Heart left ventricle (tissue), 16 donors: ENCODE measurements at regions of chr2 and their contacts with region 1.

Region 1: DNA sequence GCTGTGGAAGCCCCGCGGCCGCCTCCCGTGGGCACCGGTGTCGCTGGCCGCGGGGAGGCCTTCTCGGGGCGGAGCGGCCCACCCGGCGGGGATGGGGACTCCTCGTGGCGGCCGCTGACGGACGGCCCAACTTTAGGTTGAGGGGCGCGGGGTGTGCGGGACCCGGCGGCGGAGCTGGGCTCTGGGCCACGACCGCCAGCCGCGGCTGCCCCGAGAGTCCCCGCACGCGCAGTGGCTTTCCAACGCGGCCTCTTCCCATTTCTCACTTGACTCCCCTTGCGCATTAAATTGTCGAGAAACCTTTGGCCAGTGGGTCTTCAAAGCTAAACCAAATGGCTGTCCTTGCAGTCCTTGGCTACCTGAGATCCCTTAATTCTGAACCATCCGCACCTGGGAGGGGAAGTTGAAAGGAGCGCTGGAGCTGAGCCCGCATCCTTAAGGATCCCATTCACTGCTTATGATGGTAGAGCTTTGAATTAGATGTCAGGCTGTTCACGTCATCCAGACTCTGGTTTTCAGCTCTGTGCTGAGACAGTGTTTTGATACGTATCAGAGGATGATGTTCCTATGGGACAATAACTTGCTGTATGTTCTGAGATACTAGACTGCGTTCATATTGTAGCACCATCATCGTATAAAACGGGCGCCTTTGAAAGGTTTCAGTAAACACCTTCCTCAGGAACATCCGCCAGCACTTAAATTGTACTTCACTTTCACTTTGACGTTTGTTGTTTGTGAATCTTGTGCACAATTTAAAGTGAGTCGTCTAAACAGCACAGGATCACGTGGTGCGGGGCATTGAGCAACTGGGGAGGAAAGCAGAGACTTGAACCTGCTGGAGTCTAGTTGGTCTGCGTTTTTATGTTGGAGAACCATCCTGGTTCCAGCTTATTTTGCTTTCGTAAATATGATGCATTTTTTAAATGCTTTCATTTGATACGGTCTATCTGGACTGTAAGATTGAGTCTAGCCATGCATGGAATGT is 874 bp downstream of the CLIP4 start:
- DNase-seq: peak; percentile 25 to 72 (median 54)
- ATAC-seq: peak; percentile 6 to 47 (median 24)
- H3K4me3 ChIP-seq: peak overlapping the region; percentile 48 to 92 (median 74)
- H3K27ac ChIP-seq: peak overlapping the region; percentile 43 to 94 (median 80)
- H3K4me1 ChIP-seq: peaks cover 0 to 64% (median 18%) of the 10 kb centered on the region in 12 donors
- H3K27me3 ChIP-seq: peaks cover 0 to 3% (median 0%) of the 10 kb centered on the region in 9 donors
- CTCF ChIP-seq: no peak
- POLR2A ChIP-seq: no peak

Region 2: DNA sequence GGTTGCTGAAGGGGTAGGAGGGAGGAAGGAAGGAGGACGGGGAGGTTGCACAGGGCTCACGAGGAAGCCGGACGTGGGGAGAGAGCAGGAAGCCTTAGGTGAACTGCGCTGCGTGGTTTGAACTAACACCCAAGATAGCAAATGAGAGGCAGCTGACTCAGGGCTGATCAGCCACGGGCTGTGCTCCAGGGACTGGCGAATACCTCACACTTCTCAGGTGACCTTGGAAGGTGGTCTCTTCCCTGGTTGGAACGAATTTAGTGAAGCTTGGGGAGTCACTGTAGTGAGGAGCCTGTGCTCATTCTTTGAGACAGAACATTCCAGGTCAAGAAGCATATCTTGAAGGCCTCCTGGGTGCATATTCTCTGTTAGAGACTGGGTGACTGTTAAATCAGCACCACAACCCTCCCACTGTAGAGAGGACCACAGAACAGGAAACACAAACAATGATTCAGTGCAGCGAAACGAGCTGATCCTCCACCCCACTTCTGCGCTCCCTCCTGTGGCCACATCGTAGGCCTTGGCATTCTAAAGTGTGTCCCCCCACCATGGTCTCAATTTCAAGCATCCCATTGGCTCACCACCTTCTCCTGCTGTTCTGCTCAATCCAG is 101.2 kb before region 1 on chr2:
- intact Hi-C with region 1: loop called in 5 of 10 experiments (anchors 2 to 10 kb)
- DNase-seq: peak; percentile 57 to 81 (median 75)
- ATAC-seq: peak; percentile 4 to 50 (median 14)
- H3K4me3 ChIP-seq: peak overlapping the region in 10 of 12 donors; percentile 3 to 47 (median 30)
- H3K27ac ChIP-seq: peak overlapping the region; percentile 79 to 98 (median 88)
- H3K4me1 ChIP-seq: peaks cover 6 to 83% (median 64%) of the 10 kb centered on the region in 12 donors
- H3K27me3 ChIP-seq: no peaks in the 10 kb centered on the region
- CTCF ChIP-seq: peak in 1 of 12 donors; percentile 7
- POLR2A ChIP-seq: no peak

Region 3: GRCh38 chr2:29073933-29074332 is 42.2 kb before region 1 on chr2:
- intact Hi-C with region 1: loop called in 2 of 10 experiments (anchors 5 kb)
- DNase-seq: no peak
- ATAC-seq: peak in 1 of 4 donors; percentile 24
- H3K4me3 ChIP-seq: no peak overlapping the region
- H3K27ac ChIP-seq: peak overlapping the region in 9 of 12 donors; percentile 14 to 70 (median 49)
- H3K4me1 ChIP-seq: peaks cover 0 to 21% (median 0%) of the 10 kb centered on the region in 12 donors
- H3K27me3 ChIP-seq: no peaks in the 10 kb centered on the region
- CTCF ChIP-seq: no peak
- POLR2A ChIP-seq: no peak

Region 4: DNA sequence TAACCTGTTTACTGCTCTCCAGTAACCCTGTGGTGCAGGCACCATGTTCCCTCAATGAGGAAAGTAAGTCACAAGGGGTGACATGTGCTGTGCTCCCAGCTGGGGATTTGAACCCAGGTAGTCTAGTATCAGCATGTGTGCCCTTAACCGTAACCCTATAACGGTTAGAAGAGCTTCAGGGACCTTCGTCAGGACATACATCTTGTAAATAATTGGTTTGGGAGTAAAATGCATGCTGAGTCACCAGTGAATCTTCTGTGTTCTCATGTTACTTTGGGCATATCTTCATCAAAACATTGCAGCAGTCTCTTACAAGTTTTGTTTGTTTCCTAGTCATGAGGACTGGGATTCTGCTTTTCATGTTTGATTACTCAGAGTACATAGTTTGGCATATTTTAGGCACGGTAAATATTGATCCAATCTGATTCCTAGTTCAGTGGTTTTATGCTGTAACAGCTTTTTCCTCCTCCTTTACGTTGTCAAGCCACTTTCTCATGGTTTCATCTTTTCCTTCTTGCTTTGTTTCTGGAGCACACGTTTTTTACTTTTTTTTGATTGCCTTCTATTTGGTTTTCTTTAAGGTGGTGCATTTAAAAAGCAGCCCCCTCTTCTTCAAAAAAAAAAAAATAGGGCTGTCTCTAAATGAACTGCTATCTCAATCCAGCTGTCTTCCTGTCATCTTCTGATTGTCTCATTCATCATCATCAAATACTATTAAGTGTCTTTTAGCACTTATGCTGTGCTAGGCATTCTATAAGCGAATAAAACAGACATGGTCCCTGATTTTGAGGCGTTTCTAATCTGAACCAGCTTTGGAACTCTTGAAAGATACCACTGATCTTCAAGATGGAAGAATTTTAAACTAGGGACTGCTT is 49.5 kb after region 1 on chr2:
- intact Hi-C with region 1: no loop called
- DNase-seq: no peak
- ATAC-seq: no peak
- H3K4me3 ChIP-seq: no peak overlapping the region
- H3K27ac ChIP-seq: no peak overlapping the region
- H3K4me1 ChIP-seq: no peaks in the 10 kb centered on the region
- H3K27me3 ChIP-seq: no peaks in the 10 kb centered on the region
- CTCF ChIP-seq: no peak
- POLR2A ChIP-seq: no peak